GM23248 (cell line): ENCODE measurements at regions of chr5 and their contacts with region 1.

Region 1: DNA sequence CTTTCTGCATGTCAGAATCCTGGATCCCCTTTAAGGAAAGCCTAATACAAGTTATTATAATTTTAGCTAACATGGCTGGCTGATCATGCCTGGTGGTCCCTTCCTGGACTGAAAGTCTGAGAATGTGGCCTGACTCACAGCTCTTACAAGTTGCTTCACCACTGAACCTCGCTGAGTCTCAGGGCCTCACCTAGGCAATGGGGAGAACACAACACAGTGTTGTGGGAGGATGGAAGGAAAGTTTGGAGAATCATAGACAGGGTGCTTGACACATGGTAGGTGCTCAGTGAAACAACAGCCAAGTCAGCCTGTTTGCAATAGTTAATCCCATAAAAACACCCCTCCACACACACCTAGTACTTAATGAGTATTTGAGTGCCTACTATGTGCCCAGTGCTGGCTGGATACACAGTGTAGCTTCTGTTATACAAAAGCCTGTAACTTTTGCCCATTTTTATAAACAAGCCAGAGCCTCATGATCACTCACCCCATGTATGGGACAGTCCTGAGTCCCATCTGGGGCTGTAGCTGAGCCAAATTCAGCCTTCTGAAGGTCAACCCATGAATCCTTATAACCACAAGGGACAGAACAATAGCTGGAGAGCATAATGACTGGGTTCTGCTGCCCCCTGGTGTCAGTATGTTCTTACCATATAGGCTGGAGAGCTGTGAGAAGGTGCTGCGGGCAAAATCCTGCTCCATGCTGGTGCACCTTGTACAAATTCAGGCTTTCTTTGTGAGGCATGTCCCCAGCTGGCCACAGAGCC is 3.9 kb downstream of the ACSL6 start:
- DNase-seq: peak; percentile 86
- H3K4me3 ChIP-seq: no peak overlapping the region
- H3K27ac ChIP-seq: no peak overlapping the region
- H3K4me1 ChIP-seq: no peaks in the 10 kb centered on the region
- H3K27me3 ChIP-seq: peaks cover 21% of the 10 kb centered on the region

Region 2: GRCh38 chr5:131436081-131436480 is 571.5 kb before region 1 on chr5:
- in situ Hi-C with region 1: loop called (anchors 25 kb)
- DNase-seq: no peak
- H3K4me3 ChIP-seq: no peak overlapping the region
- H3K27ac ChIP-seq: no peak overlapping the region
- H3K4me1 ChIP-seq: 0 out of 2 replicates have a peak, but pooled peaks cover 2% of the 10 kb centered on the region
- H3K27me3 ChIP-seq: no peaks in the 10 kb centered on the region

Region 3: GRCh38 chr5:131575660-131576227 is 431.8 kb before region 1 on chr5:
- in situ Hi-C with region 1: no loop called
- DNase-seq: no peak
- H3K4me3 ChIP-seq: no peak overlapping the region
- H3K27ac ChIP-seq: no peak overlapping the region
- H3K4me1 ChIP-seq: no peaks in the 10 kb centered on the region
- H3K27me3 ChIP-seq: no peaks in the 10 kb centered on the region

Region 4: GRCh38 chr5:131589510-131590348 is 417.9 kb before region 1 on chr5:
- in situ Hi-C with region 1: loop called (anchors 10 kb)
- DNase-seq: peak; percentile 63
- H3K4me3 ChIP-seq: no peak overlapping the region
- H3K27ac ChIP-seq: no peak overlapping the region
- H3K4me1 ChIP-seq: peaks cover 21% of the 10 kb centered on the region
- H3K27me3 ChIP-seq: no peaks in the 10 kb centered on the region

Region 5: GRCh38 chr5:131846536-131846935 is 161.0 kb before region 1 on chr5:
- in situ Hi-C with region 1: no loop called
- DNase-seq: no peak
- H3K4me3 ChIP-seq: no peak overlapping the region
- H3K27ac ChIP-seq: no peak overlapping the region
- H3K4me1 ChIP-seq: no peaks in the 10 kb centered on the region
- H3K27me3 ChIP-seq: no peaks in the 10 kb centered on the region